ENCODE measurements at regions of chr1 and their contacts with region 1.

Region 1: DNA sequence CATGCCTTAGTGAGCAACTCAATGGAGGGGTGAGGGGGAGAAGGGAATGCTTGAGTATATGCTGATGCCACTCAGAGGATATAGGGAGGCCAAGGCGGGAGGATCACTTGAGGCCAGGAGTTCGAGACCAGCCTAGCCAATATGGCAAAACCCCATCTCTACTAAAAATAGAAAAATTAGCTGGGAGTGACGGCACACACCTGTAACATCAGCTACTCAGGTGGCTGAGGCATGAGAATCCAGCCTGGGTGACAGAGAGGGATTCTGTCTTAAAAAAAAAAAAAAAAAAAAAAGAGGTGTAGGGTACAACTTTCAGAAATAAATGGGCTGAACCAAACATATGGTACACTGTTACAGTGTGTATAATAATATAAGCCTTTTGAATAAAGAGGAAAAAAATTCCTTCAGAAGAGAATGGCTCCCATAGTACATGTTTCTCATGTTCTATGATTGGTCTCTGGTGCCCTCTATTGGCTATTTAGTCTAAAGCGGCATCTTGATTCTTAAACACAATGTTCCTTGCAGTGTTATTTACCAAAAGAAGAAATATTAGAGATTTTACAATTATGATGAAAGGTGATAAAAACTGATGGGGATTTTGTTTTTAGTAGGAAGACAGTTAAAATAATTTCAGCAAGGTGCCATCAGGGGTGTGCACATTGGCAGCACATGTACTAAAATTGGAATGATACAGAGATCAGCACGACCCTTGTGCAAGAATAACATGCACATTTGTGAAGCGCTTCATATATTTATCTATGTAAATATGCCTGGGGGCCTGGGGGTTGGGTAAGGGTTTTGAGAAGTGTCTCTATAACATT is 109.8 kb downstream of the PATJ start:
- DNase-seq: peak; percentile 81
- H3K4me3 ChIP-seq: no peak overlapping the region
- H3K27ac ChIP-seq: no peak overlapping the region
- H3K4me1 ChIP-seq: peaks cover 3% of the 10 kb centered on the region
- H3K27me3 ChIP-seq: no peaks in the 10 kb centered on the region

Region 2: DNA sequence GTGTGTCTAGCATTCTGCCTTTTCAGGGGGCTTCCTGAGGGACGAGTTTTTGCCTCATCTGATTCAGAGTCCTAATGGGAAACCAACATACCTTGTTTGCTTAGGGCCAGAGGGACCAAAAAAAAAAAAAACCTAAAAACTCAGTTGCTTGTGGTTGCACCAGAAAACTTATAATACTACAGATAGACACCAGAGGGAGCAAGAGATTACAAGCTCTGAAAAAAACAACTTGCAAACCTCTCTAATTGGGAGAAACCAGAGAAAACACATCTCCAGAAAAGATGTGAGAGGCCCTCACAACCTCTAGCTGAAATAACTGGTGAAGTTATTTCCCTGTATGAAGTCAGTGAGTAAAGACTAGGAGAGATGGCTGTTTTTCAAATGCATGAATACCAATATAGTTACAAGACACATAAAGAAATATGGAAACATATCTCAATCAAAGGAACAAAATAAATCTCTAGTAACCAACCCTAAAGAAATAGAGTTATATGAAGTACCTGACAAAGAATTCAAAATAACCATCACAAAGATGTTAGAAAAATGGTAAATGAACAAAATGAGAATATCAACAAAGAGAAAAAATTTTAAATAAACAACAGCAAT is 1003.4 kb before region 1 on chr1:
- in situ Hi-C with region 1: loop called (anchors 25 kb)
- DNase-seq: peak; percentile 57
- H3K4me3 ChIP-seq: no peak overlapping the region
- H3K27ac ChIP-seq: no peak overlapping the region
- H3K4me1 ChIP-seq: no peaks in the 10 kb centered on the region
- H3K27me3 ChIP-seq: no peaks in the 10 kb centered on the region

Region 3: DNA sequence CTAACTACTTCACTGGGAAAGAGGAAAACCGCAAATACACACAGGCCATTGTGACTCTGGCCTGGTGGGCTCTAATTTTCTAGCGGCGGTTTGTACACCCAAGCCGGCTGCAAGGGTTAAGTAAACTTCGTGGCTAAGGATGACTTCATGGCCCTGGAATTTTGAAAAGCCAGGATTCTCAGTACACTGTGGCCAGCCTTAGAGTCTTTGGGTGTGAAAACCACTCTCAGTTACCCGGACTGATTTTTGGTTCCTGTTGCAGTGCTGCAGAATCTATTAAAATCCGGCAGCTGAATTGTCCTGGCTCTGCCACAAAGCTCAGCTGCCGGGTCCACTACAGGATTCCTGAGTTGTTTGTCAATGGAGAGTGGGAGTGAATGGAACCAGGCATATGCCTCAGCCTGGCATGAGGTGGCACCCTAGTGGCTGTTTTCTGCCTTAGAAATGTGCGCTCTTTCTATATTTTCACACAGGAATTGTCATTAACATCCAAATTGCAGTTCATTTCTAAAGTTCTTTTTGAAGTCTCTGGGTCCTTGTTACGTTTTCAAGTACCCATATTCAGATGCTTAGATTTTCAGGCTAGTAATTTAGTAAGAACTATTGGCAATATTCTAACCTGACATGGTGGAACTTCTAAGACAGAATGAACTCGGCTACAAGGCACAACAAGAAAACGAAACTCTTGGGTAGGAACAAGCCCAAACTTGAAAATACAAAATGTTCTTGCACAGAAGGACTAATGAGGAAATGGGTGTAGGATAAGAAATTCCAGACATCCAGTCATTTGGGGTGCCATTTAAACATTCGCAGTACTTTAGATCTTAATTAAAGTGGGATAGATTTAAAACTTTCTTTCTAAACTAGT is 513.8 kb before region 1 on chr1:
- in situ Hi-C with region 1: loop called (anchors 10 kb)
- DNase-seq: peak; percentile 96
- H3K4me3 ChIP-seq: peak overlapping the region; percentile 71
- H3K27ac ChIP-seq: peak overlapping the region; percentile 61
- H3K4me1 ChIP-seq: peaks cover 17% of the 10 kb centered on the region
- H3K27me3 ChIP-seq: no peaks in the 10 kb centered on the region

Region 4: DNA sequence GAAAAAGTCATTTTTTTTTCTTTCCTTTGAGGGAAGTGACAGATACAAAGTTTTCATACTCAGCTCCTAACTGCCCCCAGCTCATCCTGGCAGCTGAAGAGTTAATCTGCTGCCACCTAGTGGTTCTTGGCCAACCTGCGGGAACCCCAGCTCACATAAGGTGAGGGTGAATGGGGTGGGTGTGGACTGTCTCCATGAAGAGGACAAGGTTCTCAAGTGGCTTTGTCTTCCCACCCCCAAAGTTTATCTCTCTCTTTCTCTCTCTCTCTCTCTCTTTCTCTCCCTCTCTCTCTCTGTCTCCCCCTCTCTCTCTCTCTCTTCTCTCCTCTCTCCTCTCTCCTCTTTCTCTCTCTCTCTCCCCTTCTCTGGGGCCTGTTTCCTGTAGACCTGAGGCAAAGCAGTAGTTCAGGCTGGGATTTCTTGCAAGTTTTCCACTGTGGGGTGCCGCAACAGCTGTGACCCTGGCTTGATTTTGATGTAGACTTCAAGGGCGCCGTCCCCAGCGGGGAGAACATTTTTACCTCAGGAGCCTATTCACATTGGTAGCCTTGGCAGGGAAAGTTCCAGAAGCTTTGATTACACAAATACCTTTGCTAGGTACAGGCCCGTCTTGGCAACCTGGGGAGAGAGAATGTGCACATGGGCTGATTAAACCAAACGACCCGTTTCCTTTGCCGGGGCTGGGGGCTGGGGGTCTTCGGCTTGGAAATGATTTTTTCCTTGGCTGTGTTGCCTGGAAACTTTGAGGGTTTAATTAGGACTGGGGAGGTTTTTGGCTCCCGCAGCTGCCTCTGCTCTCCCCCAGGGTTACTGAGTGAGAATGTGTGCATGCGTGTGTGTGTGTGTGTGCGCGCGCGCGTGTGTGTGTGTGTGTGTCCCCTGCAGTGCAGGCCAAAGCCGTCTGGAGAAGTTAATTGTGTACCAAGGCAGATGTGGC is 263.1 kb before region 1 on chr1:
- in situ Hi-C with region 1: no loop called
- DNase-seq: peak; percentile 59
- H3K4me3 ChIP-seq: no peak overlapping the region
- H3K27ac ChIP-seq: no peak overlapping the region
- H3K4me1 ChIP-seq: peaks cover 10% of the 10 kb centered on the region; the same call in 1 of the 2 replicates
- H3K27me3 ChIP-seq: no peaks in the 10 kb centered on the region

Region 5: GRCh38 chr1:62117018-62117750 is 265.1 kb after region 1 on chr1:
- in situ Hi-C with region 1: no loop called
- DNase-seq: no peak
- H3K4me3 ChIP-seq: no peak overlapping the region
- H3K27ac ChIP-seq: no peak overlapping the region
- H3K4me1 ChIP-seq: peaks cover 3% of the 10 kb centered on the region; the same call in 1 of the 2 replicates
- H3K27me3 ChIP-seq: no peaks in the 10 kb centered on the region

Measured in GM23248 (cell line).